CD4-positive, alpha-beta T cell (primary cell): ENCODE measurements at regions of chr1 and their contacts with region 1.

Region 1: GRCh38 chr1:169699711-169700110 is 11.7 kb downstream of the SELL start:
- DNase-seq: peak in 2 of 14 experiments; percentile 51 to 55
- ATAC-seq: no peak
- H3K4me3 ChIP-seq: no peak overlapping the region
- H3K4me3 Mint-ChIP-seq: peak overlapping the region; percentile 52
- H3K27ac ChIP-seq: peak overlapping the region; percentile 36 to 57
- H3K27ac Mint-ChIP-seq: no peak overlapping the region
- H3K4me1 ChIP-seq: peaks cover 80% of the 10 kb centered on the region
- H3K4me1 Mint-ChIP-seq: peaks cover 97% of the 10 kb centered on the region
- H3K27me3 ChIP-seq: no peaks in the 10 kb centered on the region
- H3K27me3 Mint-ChIP-seq: no peaks in the 10 kb centered on the region
- CTCF ChIP-seq: no peak

Region 2: GRCh38 chr1:169565335-169566271 is 134.1 kb before region 1 on chr1:
- CTCF ChIA-PET with region 1: no interaction called
- POLR2A ChIA-PET with region 1: no interaction called
- intact Hi-C with region 1: no loop called
- DNase-seq: peak in 1 of 14 experiments; percentile 22
- ATAC-seq: no peak
- H3K4me3 ChIP-seq: no peak overlapping the region
- H3K4me3 Mint-ChIP-seq: no peak overlapping the region
- H3K27ac ChIP-seq: no peak overlapping the region
- H3K27ac Mint-ChIP-seq: peak overlapping the region; percentile 18
- H3K4me1 ChIP-seq: no peaks in the 10 kb centered on the region
- H3K4me1 Mint-ChIP-seq: peaks cover 11% of the 10 kb centered on the region
- H3K27me3 ChIP-seq: no peaks in the 10 kb centered on the region
- H3K27me3 Mint-ChIP-seq: no peaks in the 10 kb centered on the region
- CTCF ChIP-seq: no peak

Region 3: GRCh38 chr1:169689395-169689794 is 10.3 kb before region 1 on chr1:
- CTCF ChIA-PET with region 1: interaction called, 12 read pairs
- POLR2A ChIA-PET with region 1: interaction called, 147 read pairs
- intact Hi-C with region 1: no loop called
- DNase-seq: no peak
- ATAC-seq: no peak
- H3K4me3 ChIP-seq: no peak overlapping the region
- H3K4me3 Mint-ChIP-seq: peak overlapping the region; percentile 17
- H3K27ac ChIP-seq: peak overlapping the region; percentile 34 to 38
- H3K27ac Mint-ChIP-seq: no peak overlapping the region
- H3K4me1 ChIP-seq: peaks cover 74% of the 10 kb centered on the region
- H3K4me1 Mint-ChIP-seq: peaks cover 23% of the 10 kb centered on the region
- H3K27me3 ChIP-seq: no peaks in the 10 kb centered on the region
- H3K27me3 Mint-ChIP-seq: no peaks in the 10 kb centered on the region
- CTCF ChIP-seq: no peak

Region 4: GRCh38 chr1:170273291-170274130 is 573.8 kb after region 1 on chr1:
- CTCF ChIA-PET with region 1: no interaction called
- POLR2A ChIA-PET with region 1: no interaction called
- intact Hi-C with region 1: no loop called
- DNase-seq: no peak
- ATAC-seq: no peak
- H3K4me3 ChIP-seq: no peak overlapping the region
- H3K4me3 Mint-ChIP-seq: no peak overlapping the region
- H3K27ac ChIP-seq: no peak overlapping the region
- H3K27ac Mint-ChIP-seq: no peak overlapping the region
- H3K4me1 ChIP-seq: no peaks in the 10 kb centered on the region
- H3K4me1 Mint-ChIP-seq: no peaks in the 10 kb centered on the region
- H3K27me3 ChIP-seq: peaks cover 5 to 20% of the 10 kb centered on the region in 2 experiments
- H3K27me3 Mint-ChIP-seq: peaks cover 48% of the 10 kb centered on the region
- CTCF ChIP-seq: no peak

Region 5: DNA sequence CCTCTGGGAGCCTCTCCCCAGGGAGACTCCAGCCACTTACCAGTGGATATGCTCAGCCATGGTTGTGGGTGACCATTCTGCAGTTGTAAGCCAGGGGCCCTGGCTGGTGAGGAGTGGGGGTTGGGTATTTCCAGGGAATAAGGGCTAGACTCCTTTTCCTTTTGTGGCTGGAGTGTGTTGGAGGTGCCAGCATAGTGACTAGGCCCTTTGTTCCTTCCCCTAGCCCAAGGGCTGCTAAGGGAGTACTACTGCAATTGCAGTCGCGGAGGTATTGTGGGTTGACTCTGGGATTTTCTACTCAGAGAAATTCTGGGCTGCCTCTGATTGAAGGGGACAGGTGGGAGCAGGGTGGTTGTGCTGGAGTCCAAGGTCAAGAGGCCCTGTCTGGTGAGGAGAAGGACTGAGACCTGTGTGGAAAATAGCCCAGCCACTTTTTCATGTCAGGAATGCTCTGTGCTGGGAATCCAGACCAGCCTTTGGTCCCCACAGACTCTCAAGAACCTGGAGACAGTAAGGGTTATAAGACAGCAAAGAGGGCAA is 1278.7 kb after region 1 on chr1:
- CTCF ChIA-PET with region 1: no interaction called
- POLR2A ChIA-PET with region 1: no interaction called
- intact Hi-C with region 1: no loop called
- DNase-seq: no peak
- ATAC-seq: no peak
- H3K4me3 ChIP-seq: no peak overlapping the region
- H3K4me3 Mint-ChIP-seq: no peak overlapping the region
- H3K27ac ChIP-seq: no peak overlapping the region
- H3K27ac Mint-ChIP-seq: no peak overlapping the region
- H3K4me1 ChIP-seq: no peaks in the 10 kb centered on the region
- H3K4me1 Mint-ChIP-seq: no peaks in the 10 kb centered on the region
- H3K27me3 ChIP-seq: no peaks in the 10 kb centered on the region
- H3K27me3 Mint-ChIP-seq: no peaks in the 10 kb centered on the region
- CTCF ChIP-seq: no peak